Activated naive CD4-positive, alpha-beta T cell treated with anti-CD3 and anti-CD28 coated beads for 36 hours (primary cell): ENCODE measurements at regions of chr4 and their contacts with region 1.

Region 1: DNA sequence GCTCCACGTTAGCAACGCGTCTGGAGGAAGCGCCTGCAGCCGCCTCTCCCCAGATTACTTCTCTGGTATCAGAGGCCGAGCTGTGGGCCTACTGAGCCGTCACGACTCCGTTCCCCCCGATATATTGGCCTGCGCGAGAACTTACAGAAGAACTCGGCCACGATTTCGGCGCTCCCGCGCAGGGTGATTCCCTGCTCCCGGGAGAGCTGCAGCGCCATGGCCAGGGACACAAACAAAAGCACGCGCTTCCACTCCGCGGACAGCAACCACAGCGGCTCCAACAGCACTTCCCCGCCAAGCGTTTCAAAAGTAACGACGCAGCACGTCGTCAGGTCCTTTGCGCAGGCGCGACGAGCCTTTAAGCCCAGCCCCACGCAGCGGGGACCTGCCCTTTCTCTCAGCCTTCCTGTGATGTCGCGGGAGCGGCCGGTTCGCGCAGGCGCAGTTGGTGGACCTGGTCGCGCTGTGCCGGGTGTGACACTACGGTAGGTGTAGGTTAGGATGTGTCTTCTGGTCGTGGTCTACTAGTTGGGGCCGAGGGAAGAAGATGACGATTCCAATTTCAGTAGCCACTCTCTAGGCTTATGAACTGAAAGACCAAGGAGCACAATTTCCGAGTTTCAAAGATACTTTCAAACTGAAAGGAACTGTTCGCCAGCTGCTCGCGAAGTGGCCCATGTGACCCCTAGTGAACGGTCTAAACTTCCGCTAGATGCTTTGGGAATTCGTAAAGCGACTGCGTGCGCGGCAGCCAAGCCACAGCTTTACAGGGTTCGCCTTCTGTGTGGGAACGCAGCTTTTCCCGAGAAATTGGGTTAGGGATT is at the start of gene MAD2L1:
- DNase-seq: peak; percentile 98
- H3K4me3 Mint-ChIP-seq: peak within 1 kb of the TSS; percentile 91
- H3K27ac Mint-ChIP-seq: peak within 1 kb of the TSS; percentile 97
- H3K4me1 Mint-ChIP-seq: peaks cover 55% of the 10 kb centered on the region
- H3K27me3 Mint-ChIP-seq: no peaks in the 10 kb centered on the region
- total RNA-seq, gene MAD2L1: 116 to 127 TPM

Region 2: GRCh38 chr4:119300101-119300978 is 766.4 kb before region 1 on chr4:
- CTCF ChIA-PET with region 1: no interaction called
- intact Hi-C with region 1: loop called (anchors 1 kb)
- DNase-seq: peak; percentile 92
- H3K4me3 Mint-ChIP-seq: peak overlapping the region; percentile 97
- H3K27ac Mint-ChIP-seq: peak overlapping the region; percentile 95
- H3K4me1 Mint-ChIP-seq: peaks cover 25% of the 10 kb centered on the region
- H3K27me3 Mint-ChIP-seq: no peaks in the 10 kb centered on the region

Region 3: DNA sequence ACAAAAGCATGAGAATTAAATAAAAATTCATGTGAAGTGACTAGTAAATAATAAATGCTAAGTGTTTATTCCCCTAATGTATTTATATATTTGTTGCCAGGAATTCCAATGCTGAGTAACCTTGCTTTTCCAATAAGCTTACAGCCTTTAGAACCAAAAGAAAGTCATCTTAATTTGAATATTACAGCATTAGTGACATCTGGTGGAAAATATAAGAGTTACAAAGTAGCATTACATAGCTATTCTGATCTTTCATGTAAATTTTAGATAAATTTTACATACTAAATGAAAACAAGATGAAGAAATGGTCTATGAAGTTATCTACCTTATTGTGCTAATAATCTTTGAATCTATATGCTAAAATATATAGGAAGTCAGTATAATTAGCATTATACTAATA is 10.5 kb before region 1 on chr4:
- CTCF ChIA-PET with region 1: interaction called, 10 read pairs
- intact Hi-C with region 1: no loop called
- DNase-seq: no peak
- H3K4me3 Mint-ChIP-seq: no peak overlapping the region
- H3K27ac Mint-ChIP-seq: no peak overlapping the region
- H3K4me1 Mint-ChIP-seq: peaks cover 6% of the 10 kb centered on the region
- H3K27me3 Mint-ChIP-seq: no peaks in the 10 kb centered on the region

Region 4: DNA sequence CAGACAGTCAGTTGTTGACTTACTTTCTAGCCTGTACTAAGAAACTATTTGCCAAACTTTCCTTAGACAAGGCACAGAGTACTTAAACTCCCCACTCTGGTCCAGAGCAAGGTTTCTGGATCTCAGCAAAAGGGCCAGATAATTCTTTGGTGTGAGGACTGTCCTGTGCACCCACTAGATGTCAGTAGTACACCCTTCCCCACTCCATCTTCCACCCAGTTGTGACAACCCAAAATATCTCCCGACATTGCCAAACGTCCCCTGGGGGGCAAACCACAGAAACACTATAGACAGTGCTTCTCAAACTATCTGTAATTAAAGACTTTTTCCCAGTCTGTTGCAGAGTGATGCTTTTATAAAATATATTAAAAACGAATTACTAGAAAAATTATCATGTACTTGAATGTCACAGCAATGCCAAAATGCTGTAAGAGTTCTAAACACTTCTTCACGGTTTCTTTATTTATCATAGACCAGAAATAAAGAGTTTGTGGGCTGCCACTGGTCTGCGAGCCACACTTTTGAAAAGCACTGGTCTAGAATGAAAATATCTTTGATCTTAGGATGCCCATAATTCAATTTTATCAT is 652.3 kb after region 1 on chr4:
- CTCF ChIA-PET with region 1: no interaction called
- intact Hi-C with region 1: loop called (anchors 5 kb)
- DNase-seq: peak; percentile 37
- H3K4me3 Mint-ChIP-seq: no peak overlapping the region
- H3K27ac Mint-ChIP-seq: no peak overlapping the region
- H3K4me1 Mint-ChIP-seq: no peaks in the 10 kb centered on the region
- H3K27me3 Mint-ChIP-seq: peaks cover 2% of the 10 kb centered on the region

Region 5: DNA sequence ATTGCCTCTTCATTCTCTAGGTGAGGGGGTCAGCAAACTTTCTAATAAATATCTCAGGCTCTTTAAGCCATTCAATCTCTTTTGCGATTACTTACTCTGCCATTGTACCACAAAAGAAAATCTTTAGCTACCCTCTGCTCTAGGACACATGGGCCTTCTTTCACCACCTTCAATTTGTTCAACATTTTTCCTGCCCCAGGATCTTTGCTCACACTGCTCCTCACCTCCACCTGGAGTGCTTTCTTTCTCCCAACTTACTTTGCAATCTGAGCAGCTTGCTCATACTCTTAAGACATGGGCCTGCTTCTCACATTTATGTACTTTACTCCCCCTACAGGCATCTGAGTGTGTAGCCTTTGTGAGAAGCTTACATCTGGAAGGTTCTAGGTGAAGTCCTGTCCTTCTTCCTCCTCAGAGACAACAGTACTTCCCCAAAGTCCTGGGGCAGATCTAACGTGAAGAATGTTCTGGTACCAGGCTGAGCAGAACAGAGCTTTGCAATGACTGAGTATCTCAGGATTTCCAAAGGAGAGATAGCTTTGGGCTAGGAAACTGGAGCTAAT is 910.8 kb after region 1 on chr4:
- CTCF ChIA-PET with region 1: no interaction called
- intact Hi-C with region 1: loop called (anchors 5 kb)
- DNase-seq: peak; percentile 26
- H3K4me3 Mint-ChIP-seq: no peak overlapping the region
- H3K27ac Mint-ChIP-seq: no peak overlapping the region
- H3K4me1 Mint-ChIP-seq: no peaks in the 10 kb centered on the region
- H3K27me3 Mint-ChIP-seq: no peaks in the 10 kb centered on the region

Region 6: GRCh38 chr4:121182296-121182695 is 1115.6 kb after region 1 on chr4:
- CTCF ChIA-PET with region 1: no interaction called
- intact Hi-C with region 1: loop called (anchors 1 kb)
- DNase-seq: peak; percentile 30
- H3K4me3 Mint-ChIP-seq: peak overlapping the region; percentile 71
- H3K27ac Mint-ChIP-seq: peak overlapping the region; percentile 91
- H3K4me1 Mint-ChIP-seq: peaks cover 60% of the 10 kb centered on the region
- H3K27me3 Mint-ChIP-seq: no peaks in the 10 kb centered on the region

Region 7: DNA sequence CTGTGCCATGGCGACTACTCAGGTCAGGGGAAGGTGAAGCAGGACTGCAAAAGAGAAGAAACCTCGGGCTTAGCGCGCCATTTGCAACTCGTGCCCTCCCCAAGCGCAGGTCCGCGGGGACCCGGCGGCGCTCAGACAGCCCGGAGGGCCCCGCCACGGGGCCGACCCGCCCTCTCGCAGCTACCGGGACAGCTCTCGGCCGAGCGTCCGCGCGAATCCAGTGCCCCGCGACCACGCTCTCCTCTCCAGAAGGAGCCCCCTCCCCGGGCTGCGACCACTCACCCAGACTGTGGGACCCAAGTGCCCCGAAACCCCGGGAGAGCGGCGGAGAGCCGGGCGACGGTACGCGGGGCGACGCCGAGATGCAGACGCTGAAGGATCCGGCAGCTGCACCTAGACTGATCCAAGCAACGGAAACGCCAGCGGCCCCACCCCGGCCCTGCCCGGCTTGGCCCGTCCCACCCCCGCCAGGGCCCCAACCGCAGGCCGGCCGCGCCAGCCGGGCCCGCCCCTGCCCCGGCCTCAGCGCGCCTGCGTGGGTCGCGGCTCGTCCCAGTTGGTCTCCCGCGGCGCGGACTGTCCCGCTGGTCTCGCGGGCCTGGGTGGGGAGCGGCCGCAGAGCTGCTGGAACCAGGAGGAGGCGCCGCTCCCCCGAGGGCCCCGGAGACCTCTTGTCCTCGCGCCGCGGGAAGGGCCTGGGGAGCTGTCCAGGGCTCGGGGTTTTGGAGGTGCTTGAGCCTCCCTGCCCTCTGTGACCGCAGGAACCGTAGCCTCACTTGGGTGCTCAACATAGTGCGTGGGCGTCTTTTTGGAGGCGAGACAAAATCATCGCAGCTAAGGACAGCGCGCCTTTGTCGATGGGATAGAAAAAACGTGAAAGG is 1630.1 kb after region 1 on chr4 and contains the start of gene ANXA5:
- CTCF ChIA-PET with region 1: no interaction called
- intact Hi-C with region 1: loop called (anchors 1 kb)
- DNase-seq: peak; percentile 79
- H3K4me3 Mint-ChIP-seq: peak within 1 kb of the TSS; percentile 93
- H3K27ac Mint-ChIP-seq: peak within 1 kb of the TSS; percentile 91
- H3K4me1 Mint-ChIP-seq: peaks cover 11% of the 10 kb centered on the region
- H3K27me3 Mint-ChIP-seq: peaks cover 14% of the 10 kb centered on the region
- total RNA-seq, gene ANXA5: 98.4 to 99.5 TPM